H1 (cell line): ENCODE measurements at regions of chr1 and their contacts with region 1.

Region 1: GRCh38 chr1:223087291-223088255 is 55.5 kb downstream of the TLR5 start:
- DNase-seq: no peak
- H3K4me3 ChIP-seq: no peak overlapping the region
- H3K27ac ChIP-seq: no peak overlapping the region
- H3K4me1 ChIP-seq: peaks cover 0 to 4% (median 0%) of the 10 kb centered on the region in 4 experiments; a peak in 1 of 7 replicates
- H3K27me3 ChIP-seq: peaks cover 0 to 5% (median 1%) of the 10 kb centered on the region in 4 experiments; a peak in 3 of 7 replicates
- CTCF ChIP-seq: no peak
- EP300 ChIP-seq: no peak
- POLR2A ChIP-seq: no peak
- RAD21 ChIP-seq: no peak

Region 2: GRCh38 chr1:222786121-222786520 is 301.5 kb before region 1 on chr1:
- CTCF ChIA-PET with region 1: interaction called, 163 read pairs
- POLR2A ChIA-PET with region 1: no interaction called
- DNase-seq: no peak
- H3K4me3 ChIP-seq: no peak overlapping the region
- H3K27ac ChIP-seq: no peak overlapping the region
- H3K4me1 ChIP-seq: no peaks in the 10 kb centered on the region
- H3K27me3 ChIP-seq: peaks cover 0 to 1% (median 0%) of the 10 kb centered on the region in 4 experiments; a peak in 1 of 7 replicates
- CTCF ChIP-seq: no peak
- EP300 ChIP-seq: no peak
- POLR2A ChIP-seq: no peak
- RAD21 ChIP-seq: no peak

Region 3: GRCh38 chr1:222948079-222948478 is 139.5 kb before region 1 on chr1:
- CTCF ChIA-PET with region 1: interaction called, 10 read pairs
- POLR2A ChIA-PET with region 1: no interaction called
- DNase-seq: no peak
- H3K4me3 ChIP-seq: no peak overlapping the region
- H3K27ac ChIP-seq: no peak overlapping the region
- H3K4me1 ChIP-seq: peaks cover 0 to 3% (median 0%) of the 10 kb centered on the region in 4 experiments; a peak in 1 of 7 replicates
- H3K27me3 ChIP-seq: no peaks in the 10 kb centered on the region
- CTCF ChIP-seq: no peak
- EP300 ChIP-seq: no peak
- POLR2A ChIP-seq: no peak
- RAD21 ChIP-seq: no peak

Region 4: DNA sequence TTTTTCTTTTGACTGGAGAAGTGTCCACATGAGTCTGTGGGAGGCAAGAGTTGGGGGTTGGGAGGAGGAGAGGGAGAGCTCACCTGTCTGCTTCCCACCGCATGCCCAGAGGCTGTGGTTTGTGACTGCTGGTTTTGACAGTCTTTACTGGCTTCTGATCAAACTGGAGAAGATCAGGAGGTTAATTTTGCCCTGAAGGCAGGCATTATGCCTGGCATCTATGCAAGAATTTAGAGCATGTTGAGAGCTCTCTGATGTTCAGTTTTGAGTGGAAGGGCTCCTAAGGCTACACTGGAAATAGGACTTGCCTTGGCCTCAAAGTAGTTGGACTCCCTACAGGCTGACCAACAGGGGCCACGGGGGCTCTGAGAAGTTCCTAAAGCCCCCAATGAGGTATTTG is 46.1 kb before region 1 on chr1:
- CTCF ChIA-PET with region 1: interaction called, 10 read pairs
- POLR2A ChIA-PET with region 1: interaction called, 4 read pairs
- DNase-seq: no peak
- H3K4me3 ChIP-seq: no peak overlapping the region
- H3K27ac ChIP-seq: no peak overlapping the region
- H3K4me1 ChIP-seq: peaks cover 0 to 7% (median 2%) of the 10 kb centered on the region in 4 experiments; a peak in 4 of 7 replicates
- H3K27me3 ChIP-seq: peaks cover 0 to 2% (median 0%) of the 10 kb centered on the region in 4 experiments; a peak in 1 of 7 replicates
- CTCF ChIP-seq: no peak
- EP300 ChIP-seq: no peak
- POLR2A ChIP-seq: no peak
- RAD21 ChIP-seq: no peak

Region 5: DNA sequence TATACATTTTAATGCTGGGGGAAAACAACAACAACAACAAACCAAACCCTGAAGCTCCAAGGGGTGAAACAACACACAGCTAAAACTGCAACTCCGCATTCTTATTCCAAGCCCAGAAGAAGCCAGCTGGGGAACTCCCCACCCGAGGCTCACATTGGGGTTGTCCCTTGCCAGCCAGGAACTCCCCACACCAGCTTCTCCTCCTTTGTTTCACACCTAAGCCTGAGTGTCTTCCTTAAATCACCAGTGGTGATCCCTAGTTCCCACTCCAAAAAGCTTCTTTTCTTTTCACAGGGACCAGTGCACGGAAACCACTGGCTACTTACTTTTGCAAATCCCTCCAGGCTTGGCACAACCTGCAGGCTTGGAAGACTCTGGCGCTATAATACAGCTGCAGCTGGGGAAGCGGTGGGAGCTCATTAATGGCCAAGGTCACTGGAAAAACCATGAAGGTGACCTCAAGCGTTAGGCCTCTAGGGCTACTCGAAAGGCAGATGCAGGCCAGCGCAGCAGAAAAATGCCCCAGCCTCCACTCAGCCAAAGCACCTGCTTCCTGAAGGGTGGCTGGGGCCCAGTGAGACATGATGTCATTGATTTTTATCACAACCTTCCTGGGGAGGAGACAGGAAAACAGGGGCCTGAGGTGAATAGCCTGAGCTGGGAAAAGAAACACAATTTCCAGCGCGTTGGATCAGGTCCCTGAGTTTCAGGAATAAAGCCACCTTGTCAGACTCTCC is 15.4 kb after region 1 on chr1:
- CTCF ChIA-PET with region 1: interaction called, 47 read pairs
- POLR2A ChIA-PET with region 1: interaction called, 4 read pairs
- DNase-seq: no peak
- H3K4me3 ChIP-seq: no peak overlapping the region
- H3K27ac ChIP-seq: no peak overlapping the region
- H3K4me1 ChIP-seq: no peaks in the 10 kb centered on the region
- H3K27me3 ChIP-seq: no peaks in the 10 kb centered on the region
- CTCF ChIP-seq: no peak
- EP300 ChIP-seq: no peak
- POLR2A ChIP-seq: no peak
- RAD21 ChIP-seq: no peak

Region 6: GRCh38 chr1:223133824-223134435 is 46.4 kb after region 1 on chr1:
- CTCF ChIA-PET with region 1: interaction called, 42 read pairs
- POLR2A ChIA-PET with region 1: no interaction called
- DNase-seq: peak; percentile 70 to 93
- H3K4me3 ChIP-seq: peak overlapping the region; percentile 34 to 63 (median 44); a peak in 7 of 8 replicates
- H3K27ac ChIP-seq: peak overlapping the region; percentile 16; the same call in 1 of the 2 replicates
- H3K4me1 ChIP-seq: peaks cover 16 to 25% (median 19%) of the 10 kb centered on the region in 4 experiments
- H3K27me3 ChIP-seq: peaks cover 0 to 7% (median 2%) of the 10 kb centered on the region in 4 experiments; a peak in 6 of 7 replicates
- CTCF ChIP-seq: peak; percentile 88 to 93 (median 88)
- EP300 ChIP-seq: peak in 1 of 2 experiments; percentile 42; a peak in 1 of 3 replicates
- POLR2A ChIP-seq: peak in 1 of 2 experiments; percentile 61; a peak in 2 of 3 replicates
- RAD21 ChIP-seq: peak; percentile 68 to 76

Region 7: DNA sequence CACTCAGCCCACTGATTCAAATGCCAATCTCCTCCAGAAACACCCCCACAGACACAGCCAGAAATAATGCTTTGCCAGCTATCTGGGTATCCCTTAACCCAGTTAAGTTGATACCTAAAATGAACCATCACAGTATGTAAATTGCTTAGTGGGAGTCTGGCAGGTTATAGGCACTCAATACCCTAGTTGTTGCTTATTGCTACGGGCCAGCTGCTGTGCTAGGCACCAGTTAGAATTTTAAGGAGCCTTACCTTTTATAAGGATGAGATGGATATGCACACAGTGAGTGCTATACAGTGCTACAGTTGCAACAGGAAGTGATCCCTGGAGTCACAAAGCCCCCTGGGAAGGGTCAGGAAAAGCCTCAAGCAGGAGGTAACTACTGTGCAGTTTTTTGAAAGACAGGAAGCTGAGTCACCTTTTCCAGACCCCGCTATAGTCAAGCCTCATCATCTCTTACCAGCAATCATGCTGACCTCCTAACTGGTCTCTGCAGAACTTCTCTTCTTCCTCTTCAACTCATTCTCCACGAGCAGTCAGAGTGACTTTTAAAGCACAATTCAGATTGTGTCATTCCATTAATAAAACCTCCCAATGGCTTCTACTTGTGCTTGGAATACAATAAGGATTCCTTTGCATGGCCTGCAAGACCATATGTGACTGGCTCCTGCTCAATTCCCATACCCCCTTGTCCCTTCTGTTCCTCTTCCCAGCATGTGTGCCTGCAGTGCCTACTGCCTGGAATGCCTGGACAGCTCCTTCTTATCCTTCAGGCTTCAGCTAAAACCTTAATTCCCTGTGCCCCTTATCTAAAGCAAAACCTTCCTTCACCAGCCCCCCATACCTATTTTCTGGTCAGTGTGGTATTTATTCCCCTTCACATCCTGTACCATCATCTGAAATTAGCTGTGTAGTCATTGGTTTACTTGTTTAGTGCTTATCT is 65.9 kb after region 1 on chr1:
- CTCF ChIA-PET with region 1: no interaction called
- POLR2A ChIA-PET with region 1: no interaction called
- DNase-seq: no peak
- H3K4me3 ChIP-seq: no peak overlapping the region
- H3K27ac ChIP-seq: no peak overlapping the region
- H3K4me1 ChIP-seq: no peaks in the 10 kb centered on the region
- H3K27me3 ChIP-seq: no peaks in the 10 kb centered on the region
- CTCF ChIP-seq: no peak
- EP300 ChIP-seq: no peak
- POLR2A ChIP-seq: no peak
- RAD21 ChIP-seq: no peak